Astrocyte of the cerebellum (primary cell): ENCODE measurements at regions of chr6 and their contacts with region 1.

Region 1: GRCh38 chr6:93183531-93183972 is 235.8 kb downstream of the EPHA7 start:
- DNase-seq: no peak
- H3K4me3 ChIP-seq: no peak overlapping the region
- CTCF ChIP-seq: no peak

Region 2: DNA sequence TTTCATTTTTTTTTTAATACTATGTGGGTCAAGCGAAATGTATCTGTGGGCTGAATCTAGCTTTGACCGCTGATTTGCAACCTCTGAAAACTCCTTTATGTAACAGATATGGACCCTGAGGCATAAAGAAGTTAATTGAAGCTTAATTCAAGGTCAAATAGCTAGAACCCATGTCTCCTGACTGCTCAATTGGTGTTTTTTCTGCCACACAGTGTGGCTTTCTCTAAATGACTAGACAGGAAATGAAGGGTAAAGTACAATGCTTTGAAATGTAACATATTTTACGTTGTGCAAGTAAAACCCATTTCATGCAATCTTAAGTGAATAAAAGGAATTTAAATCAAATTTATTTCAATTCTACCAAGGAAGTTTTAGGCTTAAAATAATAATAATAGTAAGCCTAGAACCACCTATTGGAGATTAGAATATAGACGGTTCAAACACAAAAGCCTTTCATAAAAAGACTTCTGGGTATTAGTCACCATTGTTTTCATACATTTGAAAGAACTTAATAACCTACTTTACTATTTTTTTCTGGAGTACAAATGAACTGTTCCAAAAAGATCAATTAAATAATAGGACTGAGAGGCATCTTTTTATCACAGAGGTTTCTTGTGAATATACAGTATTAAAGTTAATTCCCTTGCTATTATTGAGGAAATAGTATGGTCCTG is 44.0 kb before region 1 on chr6:
- in situ Hi-C with region 1: loop called (anchors 5 kb)
- DNase-seq: no peak
- H3K4me3 ChIP-seq: no peak overlapping the region
- CTCF ChIP-seq: no peak

Region 3: GRCh38 chr6:93238632-93239031 is 55.1 kb after region 1 on chr6:
- in situ Hi-C with region 1: no loop called
- DNase-seq: no peak
- H3K4me3 ChIP-seq: no peak overlapping the region
- CTCF ChIP-seq: no peak

Region 4: DNA sequence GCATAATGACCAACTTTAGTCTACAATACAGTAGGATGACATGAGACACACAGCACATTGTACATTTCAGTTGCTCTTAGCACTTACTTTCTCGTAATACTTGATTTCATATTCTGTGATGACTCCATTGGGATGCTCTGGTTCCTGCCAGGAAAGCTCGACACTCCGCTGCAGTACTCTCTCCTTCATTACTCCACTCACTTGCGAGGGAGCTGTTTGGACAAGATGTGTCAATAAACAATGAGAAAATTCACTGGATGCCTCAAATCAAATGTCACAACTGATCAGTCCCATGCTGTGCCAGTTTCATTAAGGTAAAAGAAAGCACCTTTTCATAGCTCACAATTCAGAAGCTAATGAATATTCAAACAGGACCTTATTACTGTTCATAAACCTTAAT is 88.7 kb after region 1 on chr6:
- in situ Hi-C with region 1: no loop called
- DNase-seq: no peak
- H3K4me3 ChIP-seq: no peak overlapping the region
- CTCF ChIP-seq: no peak